ENCODE measurements at regions of chr4 and their contacts with region 1.

Region 1: DNA sequence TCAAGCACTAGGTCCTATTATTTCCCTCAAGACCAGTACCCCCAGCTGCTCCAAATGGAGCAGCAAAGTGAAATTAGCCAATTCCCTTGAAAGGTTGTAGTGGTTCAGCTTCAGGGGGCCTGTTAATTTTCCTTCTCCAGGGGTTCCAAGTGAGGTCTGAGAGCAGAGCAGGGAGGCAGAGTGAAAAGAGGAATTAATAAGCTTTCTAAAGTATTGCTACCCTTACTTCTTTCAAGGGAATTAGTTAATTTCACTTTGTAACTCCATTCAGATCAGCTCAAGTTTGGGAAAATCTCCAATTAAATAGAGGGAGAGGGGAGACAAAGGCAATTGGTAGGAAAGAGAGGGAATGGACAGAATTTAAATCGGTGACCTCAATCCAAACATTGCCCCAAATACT is 78.7 kb upstream of the SLC7A11 start:
- DNase-seq: no peak
- ATAC-seq: no peak
- H3K4me3 ChIP-seq: no peak overlapping the region
- H3K4me1 ChIP-seq: no peaks in the 10 kb centered on the region
- CTCF ChIP-seq: no peak

Region 2: DNA sequence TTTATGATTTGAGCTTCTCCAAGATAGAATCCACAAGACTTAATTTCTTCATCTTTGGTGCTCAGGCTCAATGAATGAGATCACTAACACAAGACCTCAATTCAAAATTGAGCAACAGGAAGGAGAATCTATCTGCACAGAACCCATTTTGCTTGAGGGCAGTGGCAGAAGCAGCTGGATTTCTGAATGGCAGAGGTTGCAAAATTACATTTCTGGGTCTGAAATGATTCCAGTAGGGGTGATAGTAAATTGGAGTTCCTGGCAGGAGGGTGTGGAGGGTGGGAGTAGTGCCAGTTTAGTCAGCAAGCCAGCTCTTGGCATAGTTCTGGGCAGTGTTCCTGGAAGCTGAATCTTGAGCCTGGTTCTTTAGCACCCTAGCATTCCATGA is 359.8 kb before region 1 on chr4:
- intact Hi-C with region 1: loop called in 1 of 2 experiments (anchors 5 kb)
- DNase-seq: no peak
- ATAC-seq: no peak
- H3K4me3 ChIP-seq: no peak overlapping the region
- H3K4me1 ChIP-seq: no peaks in the 10 kb centered on the region
- CTCF ChIP-seq: no peak

Region 3: DNA sequence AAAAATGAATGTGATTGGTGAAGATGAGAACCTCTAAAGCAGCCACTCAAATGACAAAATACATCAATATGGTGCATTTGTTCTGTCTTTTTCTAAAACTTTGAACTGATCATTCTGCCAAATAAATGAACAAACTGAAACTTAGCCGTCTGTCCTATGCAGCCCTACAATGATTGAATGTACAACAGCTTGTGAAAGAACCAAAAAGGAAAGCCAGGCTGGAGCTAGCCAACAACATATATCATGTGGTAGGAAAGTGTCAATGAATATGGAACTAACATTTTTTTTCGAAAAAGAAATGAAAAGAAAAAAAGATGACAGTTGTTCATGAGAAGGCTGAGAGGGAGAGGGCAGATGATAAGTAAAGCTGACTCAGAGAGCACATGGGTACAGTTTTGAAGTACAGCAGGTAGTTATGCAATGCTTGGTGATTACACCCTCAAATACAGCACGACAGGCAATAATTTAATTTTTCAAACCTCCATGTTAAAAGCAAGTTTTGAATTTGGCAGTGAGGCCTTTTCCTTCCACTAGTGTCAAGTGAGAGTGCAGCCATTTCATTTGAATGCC is 57.5 kb before region 1 on chr4:
- intact Hi-C with region 1: no loop called
- DNase-seq: no peak
- ATAC-seq: peak; percentile 68
- H3K4me3 ChIP-seq: no peak overlapping the region
- H3K4me1 ChIP-seq: peaks cover 4% of the 10 kb centered on the region
- CTCF ChIP-seq: no peak

Measured in mucosa of descending colon (tissue), 3 donors.